Tibial artery (tissue), 4 donors: ENCODE measurements at regions of chr18 and their contacts with region 1.

Region 1: GRCh38 chr18:79507076-79507545 is 111.4 kb downstream of the NFATC1 start:
- DNase-seq: peak; percentile 72 to 91
- H3K4me3 ChIP-seq: peak overlapping the region; percentile 49 to 53
- H3K27ac ChIP-seq: peak overlapping the region; percentile 88 to 96
- H3K4me1 ChIP-seq: peaks cover 0 to 30% (median 28%) of the 10 kb centered on the region in 4 donors
- H3K27me3 ChIP-seq: no peaks in the 10 kb centered on the region
- CTCF ChIP-seq: no peak

Region 2: GRCh38 chr18:79400091-79400590 is 107.0 kb before region 1 on chr18:
- intact Hi-C with region 1: loop called (anchors 5 kb)
- DNase-seq: peak; percentile 78 to 86
- H3K4me3 ChIP-seq: peak overlapping the region; percentile 80 to 84
- H3K27ac ChIP-seq: peak overlapping the region; percentile 85 to 90
- H3K4me1 ChIP-seq: peaks cover 0 to 57% (median 43%) of the 10 kb centered on the region in 4 donors
- H3K27me3 ChIP-seq: no peaks in the 10 kb centered on the region
- CTCF ChIP-seq: no peak